ENCODE measurements at regions of chr7 and their contacts with region 1.

Region 1: GRCh38 chr7:122886357-122887081 is at the start of gene CADPS2:
- DNase-seq: peak; percentile 87
- H3K4me3 ChIP-seq: peak within 1 kb of the TSS; percentile 71 to 78 (median 73)
- H3K27ac ChIP-seq: no peak within 1 kb of the TSS
- H3K4me1 ChIP-seq: peaks cover 19% of the 10 kb centered on the region
- H3K27me3 ChIP-seq: peaks cover 3% of the 10 kb centered on the region
- CTCF ChIP-seq: no peak
- total RNA-seq, gene CADPS2: 1.1 to 7.3 TPM

Region 2: GRCh38 chr7:122550545-122550944 is 336.0 kb before region 1 on chr7:
- CTCF ChIA-PET with region 1: interaction called, 3 read pairs
- dilution Hi-C with region 1: no loop called
- in situ Hi-C with region 1: no loop called
- intact Hi-C with region 1: loop called (anchors 10 kb)
- DNase-seq: no peak
- H3K4me3 ChIP-seq: no peak overlapping the region
- H3K27ac ChIP-seq: no peak overlapping the region
- H3K4me1 ChIP-seq: no peaks in the 10 kb centered on the region
- H3K27me3 ChIP-seq: no peaks in the 10 kb centered on the region
- CTCF ChIP-seq: peak in 1 of 2 donors; percentile 24

Region 3: GRCh38 chr7:122803323-122803722 is 83.2 kb before region 1 on chr7:
- CTCF ChIA-PET with region 1: interaction called, 3 read pairs
- dilution Hi-C with region 1: no loop called
- in situ Hi-C with region 1: no loop called
- intact Hi-C with region 1: loop called (anchors 10 kb)
- DNase-seq: peak; percentile 20
- H3K4me3 ChIP-seq: no peak overlapping the region
- H3K27ac ChIP-seq: no peak overlapping the region
- H3K4me1 ChIP-seq: no peaks in the 10 kb centered on the region
- H3K27me3 ChIP-seq: no peaks in the 10 kb centered on the region
- CTCF ChIP-seq: peak; percentile 32 to 50

Region 4: DNA sequence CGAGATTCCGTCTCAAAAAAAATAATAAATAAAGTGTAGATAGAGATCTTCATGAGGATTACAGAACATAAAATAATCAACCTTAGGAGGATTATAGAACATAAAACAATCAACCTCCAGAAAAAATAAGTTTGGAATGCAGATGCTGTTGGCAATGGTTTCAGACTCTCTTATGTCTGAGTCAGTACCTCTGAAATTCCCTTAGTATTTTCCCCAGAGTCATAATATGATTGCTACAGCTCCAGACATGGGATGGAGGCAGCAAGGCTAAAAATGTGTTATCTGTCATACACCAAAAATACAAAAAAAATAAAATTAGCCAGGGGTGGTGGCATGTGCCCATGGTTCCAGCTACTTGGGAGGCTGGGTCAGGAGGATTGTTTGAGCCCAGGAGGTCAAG is 22.5 kb before region 1 on chr7:
- CTCF ChIA-PET with region 1: no interaction called
- dilution Hi-C with region 1: no loop called
- in situ Hi-C with region 1: no loop called
- intact Hi-C with region 1: no loop called
- DNase-seq: no peak
- H3K4me3 ChIP-seq: no peak overlapping the region
- H3K27ac ChIP-seq: no peak overlapping the region
- H3K4me1 ChIP-seq: no peaks in the 10 kb centered on the region
- H3K27me3 ChIP-seq: no peaks in the 10 kb centered on the region
- CTCF ChIP-seq: no peak

Region 5: GRCh38 chr7:123367484-123368122 is 481.1 kb after region 1 on chr7:
- CTCF ChIA-PET with region 1: no interaction called
- dilution Hi-C with region 1: no loop called
- in situ Hi-C with region 1: no loop called
- intact Hi-C with region 1: loop called (anchors 5 kb)
- DNase-seq: peak; percentile 15
- H3K4me3 ChIP-seq: no peak overlapping the region
- H3K27ac ChIP-seq: no peak overlapping the region
- H3K4me1 ChIP-seq: no peaks in the 10 kb centered on the region
- H3K27me3 ChIP-seq: no peaks in the 10 kb centered on the region
- CTCF ChIP-seq: peak; percentile 73 to 88

Region 6: DNA sequence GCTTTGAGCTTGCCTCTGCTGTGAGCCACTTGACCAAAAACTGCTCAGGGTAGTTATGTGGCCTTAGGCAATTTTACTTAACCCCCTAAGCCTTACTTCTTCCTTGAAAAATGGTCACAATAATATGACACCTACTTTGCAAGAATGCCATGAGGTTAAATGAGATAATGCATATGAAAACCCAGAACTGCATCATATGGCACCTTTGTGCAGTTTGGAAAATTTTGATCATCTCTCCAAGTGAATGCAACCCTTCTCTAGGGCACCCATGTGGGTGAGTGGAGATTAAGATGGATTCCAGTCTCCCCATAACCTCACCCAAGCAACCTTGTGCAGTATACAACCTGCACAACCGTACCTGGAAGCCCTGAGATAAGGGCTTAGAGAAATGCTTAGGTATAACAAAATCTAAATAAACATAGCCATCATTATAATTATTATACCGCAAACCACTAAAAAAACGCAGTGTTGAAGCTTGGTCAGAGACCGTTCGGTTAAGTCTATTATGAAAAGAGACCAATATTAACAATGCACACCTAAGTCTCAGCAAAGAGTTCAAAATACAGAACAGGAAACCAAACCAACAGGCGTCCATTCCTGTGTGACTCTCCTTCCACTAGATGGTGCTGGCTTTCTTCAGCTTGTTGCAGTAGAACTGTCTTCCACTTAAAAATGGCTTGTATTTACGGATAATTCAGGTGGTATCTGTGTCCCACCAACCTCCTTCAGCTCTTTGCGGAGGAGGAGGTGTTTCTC is 694.1 kb after region 1 on chr7:
- CTCF ChIA-PET with region 1: no interaction called
- dilution Hi-C with region 1: no loop called
- in situ Hi-C with region 1: no loop called
- intact Hi-C with region 1: no loop called
- DNase-seq: peak; percentile 41
- H3K4me3 ChIP-seq: peak overlapping the region in 1 of 3 experiments; percentile 27
- H3K27ac ChIP-seq: no peak overlapping the region
- H3K4me1 ChIP-seq: peaks cover 6% of the 10 kb centered on the region
- H3K27me3 ChIP-seq: no peaks in the 10 kb centered on the region
- CTCF ChIP-seq: peak; percentile 87 to 93